Dorsolateral prefrontal cortex (tissue), 120 donors: ENCODE measurements at regions of chr1 and their contacts with region 1.

Region 1: DNA sequence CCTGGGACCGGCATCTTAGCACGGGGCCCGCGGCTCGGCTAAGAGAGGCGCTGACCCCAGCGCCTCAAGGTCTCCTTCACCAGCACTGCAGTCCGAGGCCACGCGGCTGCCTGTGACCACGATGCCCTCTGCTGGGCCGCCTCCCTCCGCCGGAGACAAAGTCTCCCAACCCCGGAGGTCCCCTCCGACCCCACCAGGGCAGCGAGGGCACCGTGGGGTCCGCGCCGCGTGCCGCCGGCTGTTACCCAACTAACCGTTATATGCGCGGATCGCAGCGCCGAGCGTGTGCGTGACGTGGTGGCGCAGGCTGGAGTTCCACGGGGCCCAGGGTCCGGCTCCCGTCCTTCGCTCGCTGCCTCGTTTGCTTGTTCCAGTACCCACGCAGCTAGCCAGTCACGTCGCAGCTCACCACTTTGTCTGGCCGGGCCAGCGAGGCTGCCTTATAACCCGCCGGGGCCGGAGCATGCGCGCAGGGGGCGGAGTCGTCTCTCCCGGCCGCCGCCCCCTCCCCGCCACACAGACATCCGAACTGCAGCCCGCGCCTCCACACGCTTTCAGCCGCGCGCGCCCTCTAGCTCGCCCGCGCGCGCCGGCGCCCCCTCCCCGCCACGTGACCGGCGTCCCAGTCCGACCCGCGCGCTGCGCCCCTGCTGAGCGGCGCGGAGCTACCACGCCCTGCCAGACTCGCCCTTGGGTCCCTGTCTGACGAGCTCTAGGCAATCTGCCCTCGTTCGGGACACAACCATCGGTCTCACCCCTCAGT is at the start of gene SLC16A1:
- DNase-seq: peak; percentile 90 to 97 (median 95)
- H3K4me3 ChIP-seq: peak within 1 kb of the TSS; percentile 66 to 99 (median 88)
- H3K27ac ChIP-seq: peak within 1 kb of the TSS; percentile 65 to 98 (median 94)
- H3K27me3 ChIP-seq: no peaks in the 10 kb centered on the region
- CTCF ChIP-seq: peak in 55 of 56 donors; percentile 18 to 75 (median 52)
- total RNA-seq, gene SLC16A1: 13.6 to 112 (median 47.3) TPM

Region 2: GRCh38 chr1:112803906-112804762 is 151.8 kb before region 1 on chr1:
- intact Hi-C with region 1: loop called (anchors 2 to 10 kb)
- DNase-seq: peak; percentile 61 to 86 (median 76)
- H3K4me3 ChIP-seq: no peak overlapping the region
- H3K27ac ChIP-seq: no peak overlapping the region
- H3K27me3 ChIP-seq: no peaks in the 10 kb centered on the region
- CTCF ChIP-seq: peak; percentile 30 to 92 (median 76)

Region 3: GRCh38 chr1:112809253-112809684 is 146.7 kb before region 1 on chr1:
- intact Hi-C with region 1: loop called (anchors 2 to 10 kb)
- DNase-seq: peak; percentile 63 to 85 (median 78)
- H3K4me3 ChIP-seq: no peak overlapping the region
- H3K27ac ChIP-seq: no peak overlapping the region
- H3K27me3 ChIP-seq: no peaks in the 10 kb centered on the region
- CTCF ChIP-seq: peak; percentile 39 to 90 (median 81)

Region 4: GRCh38 chr1:112882271-112882744 is 73.7 kb before region 1 on chr1:
- intact Hi-C with region 1: loop called (anchors 1 kb)
- DNase-seq: peak in 3 of 10 donors; percentile 19 to 56 (median 34)
- H3K4me3 ChIP-seq: no peak overlapping the region
- H3K27ac ChIP-seq: peak overlapping the region in 54 of 59 donors; percentile 15 to 89 (median 69)
- H3K27me3 ChIP-seq: no peaks in the 10 kb centered on the region
- CTCF ChIP-seq: no peak

Region 5: GRCh38 chr1:112904071-112904830 is 51.7 kb before region 1 on chr1:
- intact Hi-C with region 1: no loop called
- DNase-seq: no peak
- H3K4me3 ChIP-seq: no peak overlapping the region
- H3K27ac ChIP-seq: peak overlapping the region in 27 of 59 donors; percentile 11 to 94 (median 85)
- H3K27me3 ChIP-seq: no peaks in the 10 kb centered on the region
- CTCF ChIP-seq: no peak

Region 6: DNA sequence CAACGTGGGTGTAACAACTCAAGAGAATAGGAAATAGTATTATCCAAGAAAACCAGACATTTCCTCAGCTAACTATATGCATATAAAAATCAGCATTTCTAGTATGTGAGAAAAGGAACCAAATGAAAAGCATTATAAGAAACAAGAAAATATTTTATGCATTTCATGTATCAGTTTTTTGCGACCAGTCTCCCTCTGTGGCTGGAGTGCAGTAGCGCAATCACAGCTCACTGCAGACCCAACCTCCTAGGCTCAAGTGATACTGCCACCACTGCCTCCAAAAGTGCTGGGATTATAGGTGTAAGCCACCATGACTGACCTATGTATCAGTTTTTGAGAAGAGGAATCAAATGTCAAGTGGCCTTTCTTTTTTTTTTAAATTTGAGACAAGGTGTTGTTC is 30.9 kb before region 1 on chr1:
- intact Hi-C with region 1: no loop called
- DNase-seq: no peak
- H3K4me3 ChIP-seq: no peak overlapping the region
- H3K27ac ChIP-seq: peak overlapping the region in 9 of 59 donors; percentile 6 to 49 (median 21)
- H3K27me3 ChIP-seq: no peaks in the 10 kb centered on the region
- CTCF ChIP-seq: peak in 2 of 56 donors; percentile 21 to 25

Region 7: DNA sequence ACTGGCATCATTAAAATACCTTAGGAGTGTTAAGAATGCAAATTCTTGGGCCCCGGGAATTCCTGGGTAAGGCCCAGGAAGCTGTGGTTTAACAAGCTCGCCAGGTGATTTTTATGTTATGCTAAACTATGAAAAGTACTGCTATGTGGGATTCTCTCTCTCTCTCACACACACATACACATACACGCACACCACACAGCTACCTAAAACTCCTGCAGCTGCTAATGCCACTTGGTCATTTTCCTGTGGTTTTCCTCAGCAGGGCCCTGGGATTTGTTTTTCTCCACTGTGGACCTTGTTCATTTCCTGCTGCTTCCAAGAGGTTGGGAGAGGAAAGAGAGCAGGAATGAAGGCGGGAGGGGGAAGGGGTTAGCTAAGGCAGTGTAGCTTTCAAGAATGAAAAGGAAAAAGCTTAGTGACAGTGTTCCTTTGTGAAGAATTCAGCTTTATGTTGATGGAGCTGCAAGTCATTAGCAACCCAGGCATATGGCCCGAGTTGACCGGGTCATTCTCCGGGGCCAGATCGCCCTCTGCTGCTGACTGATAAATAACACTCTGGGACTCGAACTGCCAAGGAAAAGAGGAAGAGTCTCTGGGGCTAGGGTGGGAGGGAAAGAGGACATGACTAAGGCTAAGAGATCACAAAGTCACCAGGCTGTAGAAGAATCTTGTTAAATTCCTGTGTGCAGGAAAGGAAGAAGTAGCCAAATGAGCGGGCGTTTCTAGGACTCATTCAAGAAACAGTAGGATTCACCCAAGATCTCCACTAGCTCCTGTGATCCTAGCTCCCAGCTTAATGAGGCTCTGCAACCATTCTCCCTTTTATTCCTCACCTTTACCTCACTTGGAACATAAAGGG is 86.6 kb after region 1 on chr1:
- intact Hi-C with region 1: loop called (anchors 1 to 2 kb)
- DNase-seq: peak; percentile 63 to 85 (median 76)
- H3K4me3 ChIP-seq: peak overlapping the region in 21 of 59 donors; percentile 0 to 42 (median 15)
- H3K27ac ChIP-seq: peak overlapping the region; percentile 21 to 96 (median 85)
- H3K27me3 ChIP-seq: no peaks in the 10 kb centered on the region
- CTCF ChIP-seq: peak in 55 of 56 donors; percentile 50 to 82 (median 68)